Transverse colon (tissue), 4 donors: ENCODE measurements at regions of chr7 and their contacts with region 1.

Region 1: GRCh38 chr7:120805636-120806388 is 52.1 kb downstream of the TSPAN12 start:
- DNase-seq: peak; percentile 59
- H3K4me3 ChIP-seq: no peak overlapping the region
- H3K27ac ChIP-seq: no peak overlapping the region
- H3K4me1 ChIP-seq: no peaks in the 10 kb centered on the region
- H3K27me3 ChIP-seq: no peaks in the 10 kb centered on the region
- CTCF ChIP-seq: peak; percentile 80 to 88 (median 83)
- EP300 ChIP-seq: no peak
- POLR2A ChIP-seq: no peak

Region 2: DNA sequence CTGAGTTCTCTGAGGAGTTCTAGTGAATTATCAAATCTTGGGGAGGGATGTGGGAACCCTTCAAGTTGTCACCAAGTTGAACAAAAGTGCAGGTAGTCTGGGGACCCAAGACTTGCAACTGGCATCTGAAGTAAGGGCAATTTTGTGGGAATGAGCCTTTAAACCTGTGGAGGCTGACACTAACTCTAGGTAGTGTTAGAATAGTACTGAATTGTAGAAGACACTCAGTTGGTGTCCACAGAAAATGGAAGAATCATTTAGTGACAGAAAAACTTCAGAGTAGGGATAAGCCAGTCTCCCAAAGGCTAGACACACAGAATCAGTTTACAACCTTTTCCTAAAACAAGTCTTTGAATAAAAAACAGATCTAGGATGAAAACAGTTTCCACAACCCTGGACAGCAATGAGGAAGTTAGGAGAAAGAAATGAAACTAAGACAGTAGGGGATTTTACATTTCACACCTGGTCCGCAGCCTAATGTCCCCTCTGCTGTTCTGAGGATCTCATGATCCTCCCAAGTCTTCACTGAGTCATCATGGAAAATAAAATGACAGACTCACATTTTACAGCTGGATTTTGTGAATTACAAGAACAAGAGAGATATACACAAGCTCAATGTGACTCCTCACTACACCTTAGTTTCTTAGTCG is 121.8 kb after region 1 on chr7:
- in situ Hi-C with region 1: loop called in 2 of 4 experiments (anchors 10 kb)
- intact Hi-C with region 1: no loop called
- DNase-seq: no peak
- H3K4me3 ChIP-seq: no peak overlapping the region
- H3K27ac ChIP-seq: no peak overlapping the region
- H3K4me1 ChIP-seq: peaks cover 0 to 7% (median 0%) of the 10 kb centered on the region in 4 donors
- H3K27me3 ChIP-seq: no peaks in the 10 kb centered on the region
- CTCF ChIP-seq: no peak
- EP300 ChIP-seq: no peak
- POLR2A ChIP-seq: no peak

Region 3: DNA sequence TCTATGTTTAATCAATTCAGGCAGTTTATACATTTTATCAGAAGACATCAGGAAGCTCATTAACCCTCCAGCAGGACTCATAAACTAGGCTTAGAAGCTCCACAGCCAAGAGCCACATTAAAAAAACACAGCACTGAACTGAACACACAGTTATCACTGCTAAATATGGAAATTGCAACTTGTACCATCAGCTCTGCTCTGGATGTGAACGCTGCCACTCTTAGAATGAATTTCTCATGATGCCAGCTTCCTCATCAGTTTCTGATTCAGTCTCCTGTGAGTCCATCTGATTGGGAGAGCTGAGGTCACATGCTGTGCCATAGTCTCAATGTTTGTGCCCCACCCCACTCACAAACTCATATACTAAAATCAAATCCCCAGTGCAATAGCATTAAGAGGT is 127.7 kb after region 1 on chr7:
- in situ Hi-C with region 1: loop called in 2 of 4 experiments (anchors 10 kb)
- intact Hi-C with region 1: no loop called
- DNase-seq: no peak
- H3K4me3 ChIP-seq: no peak overlapping the region
- H3K27ac ChIP-seq: no peak overlapping the region
- H3K4me1 ChIP-seq: peaks cover 0 to 7% (median 0%) of the 10 kb centered on the region in 4 donors
- H3K27me3 ChIP-seq: no peaks in the 10 kb centered on the region
- CTCF ChIP-seq: no peak
- EP300 ChIP-seq: no peak
- POLR2A ChIP-seq: no peak

Region 4: GRCh38 chr7:120941064-120941463 is 135.3 kb after region 1 on chr7:
- in situ Hi-C with region 1: loop called in 2 of 4 experiments (anchors 10 kb)
- intact Hi-C with region 1: no loop called
- DNase-seq: no peak
- H3K4me3 ChIP-seq: no peak overlapping the region
- H3K27ac ChIP-seq: no peak overlapping the region
- H3K4me1 ChIP-seq: peaks cover 8 to 20% (median 11%) of the 10 kb centered on the region in 4 donors
- H3K27me3 ChIP-seq: no peaks in the 10 kb centered on the region
- CTCF ChIP-seq: peak; percentile 31 to 45 (median 42)
- EP300 ChIP-seq: no peak
- POLR2A ChIP-seq: no peak

Region 5: GRCh38 chr7:120950539-120951308 is 144.9 kb after region 1 on chr7 and contains the start of gene ING3:
- in situ Hi-C with region 1: loop called in 1 of 4 experiments (anchors 10 kb)
- intact Hi-C with region 1: loop called (anchors 10 kb)
- DNase-seq: peak; percentile 98
- H3K4me3 ChIP-seq: peak within 1 kb of the TSS; percentile 57 to 63 (median 60)
- H3K27ac ChIP-seq: peak within 1 kb of the TSS; percentile 92 to 95 (median 94)
- H3K4me1 ChIP-seq: peaks cover 5 to 37% (median 9%) of the 10 kb centered on the region in 4 donors
- H3K27me3 ChIP-seq: no peaks in the 10 kb centered on the region
- CTCF ChIP-seq: no peak
- EP300 ChIP-seq: no peak
- POLR2A ChIP-seq: peak; percentile 57
- total RNA-seq, gene ING3: 1.5 to 23.6 (median 16.2) TPM

Region 6: GRCh38 chr7:121081327-121081936 is 275.6 kb after region 1 on chr7:
- in situ Hi-C with region 1: loop called in 2 of 4 experiments (anchors 25 kb)
- intact Hi-C with region 1: no loop called
- DNase-seq: no peak
- H3K4me3 ChIP-seq: no peak overlapping the region
- H3K27ac ChIP-seq: peak overlapping the region in 1 of 4 donors; percentile 26
- H3K4me1 ChIP-seq: peaks cover 0 to 5% (median 1%) of the 10 kb centered on the region in 4 donors
- H3K27me3 ChIP-seq: no peaks in the 10 kb centered on the region
- CTCF ChIP-seq: peak; percentile 61 to 77 (median 72)
- EP300 ChIP-seq: no peak
- POLR2A ChIP-seq: no peak

Region 7: GRCh38 chr7:121107923-121108498 is 302.2 kb after region 1 on chr7:
- in situ Hi-C with region 1: loop called in 2 of 4 experiments (anchors 25 kb)
- intact Hi-C with region 1: no loop called
- DNase-seq: no peak
- H3K4me3 ChIP-seq: no peak overlapping the region
- H3K27ac ChIP-seq: no peak overlapping the region
- H3K4me1 ChIP-seq: no peaks in the 10 kb centered on the region
- H3K27me3 ChIP-seq: no peaks in the 10 kb centered on the region
- CTCF ChIP-seq: peak; percentile 66 to 83 (median 74)
- EP300 ChIP-seq: no peak
- POLR2A ChIP-seq: no peak